GM23248 (cell line): ENCODE measurements at regions of chr10 and their contacts with region 1.

Region 1: DNA sequence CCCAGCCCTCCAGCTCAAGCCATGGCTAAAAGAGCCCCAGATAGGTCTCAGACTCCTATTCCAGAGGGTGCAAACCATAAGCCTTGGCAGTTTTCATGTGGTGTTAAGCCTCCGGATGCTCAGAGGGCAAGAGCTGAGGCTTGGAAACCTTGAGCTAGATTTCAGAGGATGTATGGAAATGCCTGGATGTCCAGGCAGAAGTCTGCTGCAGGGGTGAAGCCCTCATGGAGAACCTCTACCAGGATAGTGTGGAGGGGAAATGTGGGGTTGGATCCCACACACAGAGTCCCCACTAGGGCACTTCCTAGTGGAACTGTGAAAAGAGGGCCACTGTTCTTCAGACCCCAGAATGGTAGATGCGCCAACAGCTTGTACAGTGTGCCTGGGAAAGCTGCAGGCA is 13.2 kb upstream of the HPSE2 start:
- DNase-seq: no peak
- H3K4me3 ChIP-seq: no peak overlapping the region
- H3K27ac ChIP-seq: no peak overlapping the region
- H3K4me1 ChIP-seq: no peaks in the 10 kb centered on the region
- H3K27me3 ChIP-seq: no peaks in the 10 kb centered on the region; the same call in 1 of the 2 replicates

Region 2: DNA sequence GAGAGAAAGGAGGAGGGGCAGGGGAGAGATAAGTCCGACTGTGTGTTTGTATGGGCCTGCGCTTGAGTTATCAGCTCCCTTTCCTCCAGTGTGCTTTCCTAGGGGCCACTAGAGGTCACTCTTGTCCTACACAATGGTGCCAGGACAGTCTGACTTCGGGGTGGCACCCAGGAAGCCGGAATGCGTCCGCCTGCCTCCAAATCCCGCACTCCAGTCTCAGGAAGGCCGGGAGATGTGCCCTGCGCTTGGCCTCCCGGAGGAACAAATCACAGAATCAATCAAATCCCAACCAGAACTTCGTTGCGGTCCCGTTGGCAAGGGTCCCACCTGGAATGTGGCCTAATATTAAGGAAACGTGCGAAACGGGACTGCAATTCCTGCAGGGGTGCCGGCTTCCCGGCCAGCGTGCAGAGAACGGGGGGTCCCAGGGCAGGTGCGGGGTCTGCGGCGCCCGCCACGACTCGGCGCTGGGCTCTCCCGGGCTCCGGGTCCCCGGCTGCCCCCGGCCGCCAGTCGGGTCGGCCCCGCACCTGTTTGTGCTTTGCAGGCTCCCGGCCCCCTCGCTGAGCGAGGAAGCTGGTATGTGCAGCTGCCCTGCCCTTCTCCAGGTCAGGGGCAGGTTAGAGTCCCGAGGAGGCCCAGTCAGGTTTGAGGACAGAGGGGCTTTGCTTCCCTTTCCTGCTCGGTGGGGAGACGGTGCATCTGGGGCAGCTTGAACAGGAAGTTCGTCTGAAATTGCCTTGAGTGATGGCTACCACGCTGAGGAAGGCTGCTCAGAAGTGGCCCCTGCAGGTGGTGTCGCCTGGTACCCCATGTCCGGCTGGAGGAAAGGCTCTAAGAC is 781.1 kb before region 1 on chr10:
- in situ Hi-C with region 1: loop called (anchors 10 kb)
- DNase-seq: peak; percentile 91
- H3K4me3 ChIP-seq: peak overlapping the region; percentile 72
- H3K27ac ChIP-seq: no peak overlapping the region
- H3K4me1 ChIP-seq: no peaks in the 10 kb centered on the region; the same call in 1 of the 2 replicates
- H3K27me3 ChIP-seq: no peaks in the 10 kb centered on the region